Dorsolateral prefrontal cortex (tissue), 120 donors: ENCODE measurements at regions of chr19 and their contacts with region 1.

Region 1: DNA sequence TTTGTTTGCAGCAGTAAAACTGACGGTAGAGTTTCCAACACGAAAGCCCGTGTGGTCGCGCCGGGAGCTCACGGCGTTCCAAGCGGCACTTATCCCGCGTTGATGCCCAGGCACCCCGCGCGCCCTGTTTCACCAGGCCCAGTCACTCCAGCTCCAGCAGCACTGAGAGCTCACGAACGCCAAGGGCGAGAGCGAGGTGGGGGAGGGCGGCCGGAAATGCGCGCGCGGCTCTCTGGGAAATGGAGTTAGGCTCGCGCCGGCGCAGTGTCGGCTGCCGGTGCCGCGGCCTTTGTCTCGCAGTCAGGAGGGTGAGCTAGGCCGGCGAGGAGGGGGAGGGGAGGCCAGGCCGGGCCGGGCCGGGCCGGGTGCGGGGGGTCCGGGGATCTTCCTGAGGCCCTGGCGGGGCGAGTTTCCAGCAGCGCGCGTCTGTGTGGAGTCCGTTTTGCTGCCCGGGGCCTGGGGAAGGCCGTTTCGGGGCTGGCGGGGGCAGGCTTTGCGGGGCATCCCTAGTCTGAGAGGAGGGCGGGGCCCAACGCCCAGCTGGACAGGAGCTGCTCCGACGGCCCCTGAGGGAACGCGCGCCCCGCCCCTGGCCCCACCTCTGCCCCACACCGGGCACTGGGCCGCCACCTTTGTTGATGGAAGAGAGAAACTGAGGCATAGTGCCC is at the start of gene ZNF135:
- DNase-seq: peak; percentile 74 to 90 (median 83)
- H3K4me3 ChIP-seq: peak within 1 kb of the TSS; percentile 60 to 98 (median 80)
- H3K27ac ChIP-seq: peak within 1 kb of the TSS; percentile 70 to 99 (median 95)
- H3K27me3 ChIP-seq: no peaks in the 10 kb centered on the region
- CTCF ChIP-seq: peak in 15 of 56 donors; percentile 11 to 45 (median 27)
- total RNA-seq, gene ZNF135: 9.8 to 28.1 (median 16.8) TPM

Region 2: DNA sequence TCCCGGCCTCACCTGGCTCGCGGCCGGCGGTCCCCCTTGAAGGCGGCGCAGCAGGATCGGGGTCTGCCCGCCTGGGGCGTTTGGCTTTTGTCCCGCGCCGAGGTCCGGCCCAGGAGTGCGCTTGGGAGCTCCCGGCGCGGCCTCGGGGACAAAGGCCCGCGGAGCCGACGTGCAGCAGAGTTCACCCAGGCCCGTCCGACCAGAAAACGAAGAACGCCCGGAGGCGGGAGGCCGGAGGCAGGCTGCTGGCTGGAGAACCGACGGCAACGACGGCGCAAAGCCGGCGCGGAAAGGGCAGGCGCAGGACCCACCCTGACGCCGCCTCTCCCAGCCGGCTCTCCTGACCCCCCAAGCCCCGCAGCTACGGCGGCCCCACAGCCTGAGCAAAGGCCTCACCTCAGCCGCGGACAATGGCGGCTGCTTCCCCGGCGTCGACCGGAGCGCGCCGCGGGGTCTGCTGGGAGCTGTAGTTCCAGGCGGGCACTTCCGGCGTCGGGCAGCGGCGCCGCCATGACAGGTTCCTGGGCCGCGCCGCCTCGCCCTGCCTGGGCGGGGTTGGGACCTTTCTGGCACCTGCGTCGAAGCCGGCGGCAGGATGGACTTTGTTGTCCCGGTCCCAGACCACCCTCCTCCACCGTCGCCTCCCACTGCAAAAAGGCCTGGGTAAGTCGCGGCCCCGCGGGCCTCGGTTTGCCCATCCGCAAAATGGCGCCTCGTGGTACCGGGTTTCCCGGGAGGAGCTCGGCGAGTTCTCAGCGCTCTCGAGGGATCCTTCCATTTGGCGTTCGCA is 56.6 kb before region 1 on chr19 and contains the start of gene ZNF606:
- intact Hi-C with region 1: loop called in 1 of 2 experiments (anchors 5 kb)
- DNase-seq: peak; percentile 66 to 91 (median 83)
- H3K4me3 ChIP-seq: peak within 1 kb of the TSS; percentile 64 to 100 (median 92)
- H3K27ac ChIP-seq: peak within 1 kb of the TSS; percentile 36 to 97 (median 92)
- H3K27me3 ChIP-seq: no peaks in the 10 kb centered on the region
- CTCF ChIP-seq: peak in 28 of 56 donors; percentile 6 to 53 (median 34)
- total RNA-seq, gene ZNF606: 14.4 to 48.2 (median 23.9) TPM

Region 3: GRCh38 chr19:58021541-58022282 is 37.4 kb before region 1 on chr19:
- intact Hi-C with region 1: loop called in 1 of 2 experiments (anchors 5 kb)
- DNase-seq: peak in 4 of 10 donors; percentile 58 to 69 (median 66)
- H3K4me3 ChIP-seq: peak overlapping the region in 3 of 59 donors; percentile 6 to 32 (median 14)
- H3K27ac ChIP-seq: no peak overlapping the region
- H3K27me3 ChIP-seq: no peaks in the 10 kb centered on the region
- CTCF ChIP-seq: peak; percentile 54 to 91 (median 80)

Region 4: GRCh38 chr19:58033741-58034471 is 25.2 kb before region 1 on chr19 and contains the start of gene ZSCAN1:
- intact Hi-C with region 1: loop called in 1 of 2 experiments (anchors 2 kb)
- DNase-seq: peak; percentile 93 to 98 (median 98)
- H3K4me3 ChIP-seq: peak within 1 kb of the TSS; percentile 34 to 83 (median 67)
- H3K27ac ChIP-seq: peak within 1 kb of the TSS in 51 of 59 donors; percentile 39 to 93 (median 77)
- H3K27me3 ChIP-seq: no peaks in the 10 kb centered on the region
- CTCF ChIP-seq: peak in 18 of 56 donors; percentile 10 to 35 (median 20)
- total RNA-seq, gene ZSCAN1: 0.94 to 10.6 (median 4.2) TPM

Region 5: DNA sequence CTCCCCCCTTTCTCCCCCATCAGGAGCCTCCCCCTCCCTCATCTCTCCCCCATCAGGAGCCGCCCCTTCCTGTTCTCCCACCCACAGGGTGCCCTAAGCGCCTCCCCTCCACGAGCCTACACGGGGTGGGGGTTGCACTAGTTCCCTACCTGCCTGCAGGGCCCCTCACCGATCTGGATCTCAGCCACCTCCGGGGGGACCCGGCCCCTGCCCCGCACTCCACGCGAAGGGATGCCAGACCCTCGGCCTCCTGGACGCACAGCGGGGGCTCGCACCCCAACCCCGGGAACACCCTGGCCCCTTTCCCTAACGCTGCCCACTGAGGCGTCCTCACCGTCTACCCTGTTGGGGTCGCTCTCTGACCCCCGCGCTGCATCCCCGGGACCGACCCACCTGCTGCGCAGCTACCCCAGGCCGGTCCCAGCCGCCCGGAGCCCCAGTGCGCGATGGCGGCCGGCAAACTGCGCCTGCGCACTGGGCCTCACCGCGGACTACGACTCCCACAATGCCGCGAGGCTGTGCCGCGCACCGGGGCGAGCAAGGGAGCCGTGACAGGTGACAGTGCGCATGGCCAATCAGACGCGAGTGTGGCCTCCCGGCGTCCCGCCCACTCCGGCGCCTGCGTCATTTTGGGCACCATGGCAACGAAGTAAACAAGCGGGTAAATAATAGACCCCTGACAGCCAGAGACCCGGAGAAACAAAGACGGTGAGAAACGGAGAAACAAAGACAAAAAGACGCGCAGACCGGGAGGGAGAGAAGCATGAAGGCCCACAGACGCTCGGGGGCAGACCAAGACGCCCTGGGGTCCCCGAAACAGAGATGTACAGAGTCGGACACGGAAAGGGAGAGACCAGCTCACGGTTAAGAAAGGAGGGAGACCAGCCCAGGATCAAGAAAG is 38.9 kb after region 1 on chr19 and contains the start of gene ZSCAN18:
- intact Hi-C with region 1: loop called (anchors 2 to 5 kb)
- DNase-seq: peak; percentile 98 to 99 (median 98)
- H3K4me3 ChIP-seq: peak within 1 kb of the TSS; percentile 72 to 100 (median 98)
- H3K27ac ChIP-seq: peak within 1 kb of the TSS; percentile 7 to 99 (median 92)
- H3K27me3 ChIP-seq: no peaks in the 10 kb centered on the region
- CTCF ChIP-seq: peak in 20 of 56 donors; percentile 2 to 49 (median 14)
- total RNA-seq, gene ZSCAN18: 140 to 230 (median 177) TPM